Cardiac septum (tissue), 1 donor: ENCODE measurements at regions of chrX and their contacts with region 1.

Region 1: GRCh38 chrX:33336783-33337182 is 125.4 kb upstream of the DMD start:
- DNase-seq: no peak

Region 2: GRCh38 chrX:33211356-33212260 is 125.2 kb before region 1 on chrX and contains the start of gene DMD:
- intact Hi-C with region 1: loop called (anchors 10 kb)
- DNase-seq: peak; percentile 73
- total RNA-seq, gene DMD: 256 TPM